ENCODE measurements at regions of chr19 and their contacts with region 1.

Region 1: GRCh38 chr19:4352701-4353121 is 9.3 kb downstream of the MPND start:
- DNase-seq: no peak
- ATAC-seq: peak; percentile 50 to 61

Region 2: GRCh38 chr19:4267101-4267900 is 85.4 kb before region 1 on chr19:
- intact Hi-C with region 1: loop called (anchors 5 kb)
- DNase-seq: peak; percentile 43
- ATAC-seq: peak; percentile 58 to 65

Region 3: DNA sequence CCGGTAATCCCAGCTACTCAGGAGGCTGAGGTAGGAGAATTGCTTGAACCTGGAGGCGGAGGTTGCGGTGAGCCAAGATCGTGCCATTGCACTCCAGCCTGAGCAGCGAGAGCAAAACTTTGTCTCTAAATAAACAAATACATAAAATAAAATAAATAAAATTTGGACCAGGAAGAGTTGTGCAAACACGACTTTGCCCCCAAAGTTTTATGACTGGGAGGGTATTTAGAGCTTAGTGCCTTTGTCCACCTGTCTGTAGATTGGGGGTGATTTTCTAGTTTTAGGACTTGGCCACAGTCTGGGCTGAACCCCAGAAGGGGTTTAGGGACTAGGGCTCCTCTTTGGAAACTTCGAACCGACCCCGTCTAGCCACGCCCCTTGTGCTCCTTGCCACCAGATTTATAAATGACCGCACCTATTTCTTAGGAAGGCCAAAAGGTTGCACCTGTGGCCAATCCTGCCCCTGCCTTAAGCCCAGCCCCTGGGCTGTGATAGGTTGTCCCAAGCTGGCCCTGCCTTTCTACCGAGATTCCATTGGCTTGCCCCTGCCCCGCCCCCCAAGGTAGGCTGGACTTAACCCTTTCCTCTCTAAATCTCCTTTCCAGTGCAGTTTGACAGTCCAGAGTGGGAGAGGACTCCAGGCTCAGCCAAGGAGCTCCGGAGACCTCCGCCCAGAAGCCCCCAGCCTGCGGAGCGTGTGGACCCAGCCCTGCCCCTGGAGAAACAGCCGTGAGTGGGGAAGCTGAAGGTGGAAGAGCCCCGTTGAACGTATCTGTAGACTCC is 68.3 kb before region 1 on chr19:
- intact Hi-C with region 1: no loop called
- DNase-seq: no peak
- ATAC-seq: no peak

Measured in left cardiac atrium (tissue), 4 donors.